ENCODE measurements at regions of chr20 and their contacts with region 1.

Region 1: DNA sequence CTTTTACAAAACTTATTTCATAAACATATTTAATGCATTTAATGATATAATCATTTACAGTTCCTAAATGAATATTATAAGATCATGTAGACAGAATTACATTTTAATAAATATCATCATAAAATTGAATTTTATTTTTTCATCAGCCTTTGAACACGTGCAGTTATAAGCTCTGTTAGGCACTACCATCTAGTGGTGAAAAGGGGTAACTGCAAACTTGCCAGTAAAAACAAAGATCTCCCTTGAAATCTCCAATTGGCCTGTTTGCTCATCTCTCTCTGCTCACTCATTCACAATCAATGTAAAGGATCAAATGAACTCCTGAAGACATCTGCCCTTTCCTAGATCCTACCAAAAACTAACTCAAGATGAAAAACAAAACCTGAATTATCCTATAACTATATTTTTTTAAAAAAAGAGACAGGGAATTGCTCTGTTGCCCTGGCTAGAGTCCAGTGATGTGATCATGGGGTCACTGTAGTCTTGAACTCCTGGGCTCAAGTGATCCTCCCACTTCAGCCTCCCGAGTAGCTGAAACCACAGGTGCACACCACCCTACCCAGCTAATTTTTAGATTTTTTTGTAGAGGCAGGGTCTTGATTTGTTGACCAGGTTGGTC is 31.7 kb downstream of the SAMHD1 start:
- DNase-seq: peak; percentile 25 to 40
- H3K4me3 ChIP-seq: no peak overlapping the region
- H3K27ac ChIP-seq: no peak overlapping the region
- H3K4me1 ChIP-seq: peaks cover 15% of the 10 kb centered on the region
- H3K27me3 ChIP-seq: no peaks in the 10 kb centered on the region
- CTCF ChIP-seq: peak; percentile 89

Region 2: GRCh38 chr20:35648836-35649235 is 1271.0 kb before region 1 on chr20:
- CTCF ChIA-PET with region 1: interaction called, 14 read pairs
- POLR2A ChIA-PET with region 1: no interaction called
- intact Hi-C with region 1: no loop called
- DNase-seq: no peak
- H3K4me3 ChIP-seq: no peak overlapping the region
- H3K27ac ChIP-seq: no peak overlapping the region
- H3K4me1 ChIP-seq: no peaks in the 10 kb centered on the region
- H3K27me3 ChIP-seq: no peaks in the 10 kb centered on the region
- CTCF ChIP-seq: no peak

Region 3: DNA sequence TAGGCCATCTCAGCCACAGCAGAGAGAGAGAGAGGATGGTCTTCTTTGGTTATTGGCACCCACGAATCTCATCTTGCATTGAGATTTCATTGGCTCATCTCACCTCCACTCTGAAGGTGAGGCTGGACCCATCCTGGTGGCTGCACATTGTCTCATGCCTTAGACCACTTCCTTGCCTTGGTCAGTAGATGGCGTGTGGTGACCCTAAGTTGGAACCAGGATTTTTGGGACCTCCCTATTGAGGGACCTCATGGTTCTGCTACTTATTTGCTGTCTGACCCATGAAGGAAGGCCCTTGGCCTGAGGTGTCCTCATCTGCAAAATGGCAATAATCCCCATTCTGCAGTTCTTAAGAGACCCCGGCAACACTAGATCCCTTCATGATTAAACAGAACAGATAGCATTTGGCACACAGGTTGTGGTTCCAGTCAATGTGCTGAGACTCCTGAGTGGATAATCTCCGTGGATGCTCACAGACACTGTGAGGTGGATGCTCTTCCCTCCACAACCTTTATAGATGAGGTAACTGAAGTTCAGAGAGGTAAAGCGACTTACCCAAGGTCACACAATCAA is 705.1 kb before region 1 on chr20:
- CTCF ChIA-PET with region 1: interaction called, 3 read pairs
- POLR2A ChIA-PET with region 1: no interaction called
- intact Hi-C with region 1: loop called (anchors 10 kb)
- DNase-seq: no peak
- H3K4me3 ChIP-seq: no peak overlapping the region
- H3K27ac ChIP-seq: no peak overlapping the region
- H3K4me1 ChIP-seq: no peaks in the 10 kb centered on the region
- H3K27me3 ChIP-seq: no peaks in the 10 kb centered on the region
- CTCF ChIP-seq: peak; percentile 72

Region 4: GRCh38 chr20:36377352-36378326 is 542.2 kb before region 1 on chr20:
- CTCF ChIA-PET with region 1: interaction called, 16 read pairs
- POLR2A ChIA-PET with region 1: no interaction called
- intact Hi-C with region 1: no loop called
- DNase-seq: no peak
- H3K4me3 ChIP-seq: no peak overlapping the region
- H3K27ac ChIP-seq: no peak overlapping the region
- H3K4me1 ChIP-seq: no peaks in the 10 kb centered on the region
- H3K27me3 ChIP-seq: peaks cover 61% of the 10 kb centered on the region
- CTCF ChIP-seq: no peak

Region 5: GRCh38 chr20:36792422-36792821 is 127.4 kb before region 1 on chr20:
- CTCF ChIA-PET with region 1: interaction called, 6 read pairs
- POLR2A ChIA-PET with region 1: no interaction called
- intact Hi-C with region 1: loop called (anchors 1 kb)
- DNase-seq: peak; percentile 85 to 87
- H3K4me3 ChIP-seq: no peak overlapping the region
- H3K27ac ChIP-seq: no peak overlapping the region
- H3K4me1 ChIP-seq: no peaks in the 10 kb centered on the region
- H3K27me3 ChIP-seq: no peaks in the 10 kb centered on the region
- CTCF ChIP-seq: peak; percentile 66

Region 6: DNA sequence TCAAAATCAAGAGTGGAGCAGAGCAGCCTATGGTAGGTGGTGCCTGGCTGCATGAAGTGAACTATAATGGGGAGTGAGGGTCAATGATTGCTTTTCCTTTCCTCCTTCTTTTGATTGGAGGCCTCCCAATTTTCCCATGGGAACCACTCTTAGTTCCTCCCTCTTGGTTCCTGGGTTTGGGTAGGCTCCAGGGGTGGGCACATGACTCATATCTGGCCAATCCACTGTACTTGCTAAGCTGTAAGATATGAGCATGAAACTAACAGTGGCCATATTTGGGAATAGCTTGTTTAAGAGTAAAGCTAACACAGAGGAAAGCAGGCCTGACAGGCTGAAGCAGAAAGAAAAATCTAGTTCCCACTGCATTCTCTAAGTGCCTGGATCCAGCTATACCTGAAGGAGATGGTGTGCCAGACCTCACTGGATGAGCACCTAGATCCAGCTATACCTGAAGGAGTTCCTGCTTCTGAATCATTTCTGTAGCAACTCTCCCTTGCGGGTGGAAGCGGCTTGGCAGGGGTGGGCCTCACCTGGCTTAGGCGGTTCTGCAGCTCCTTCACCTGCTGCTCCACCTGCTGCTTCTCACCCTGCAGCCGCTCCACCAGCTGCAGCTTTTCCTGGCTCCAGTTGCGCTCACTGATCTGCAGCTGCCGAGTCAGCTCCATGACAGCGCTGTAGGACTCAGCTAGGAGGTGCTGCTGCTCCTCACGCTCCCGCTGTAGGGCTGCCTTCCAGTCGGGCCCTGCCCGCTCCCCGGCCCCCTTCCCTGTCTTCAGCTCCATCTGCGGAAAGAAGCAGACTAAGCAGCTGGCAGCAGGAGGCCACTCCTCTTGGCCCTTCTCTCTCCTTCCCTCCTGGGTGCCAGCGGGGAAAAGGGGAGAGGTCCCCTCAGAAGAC is 117.2 kb before region 1 on chr20:
- CTCF ChIA-PET with region 1: interaction called, 11 read pairs
- POLR2A ChIA-PET with region 1: no interaction called
- intact Hi-C with region 1: no loop called
- DNase-seq: no peak
- H3K4me3 ChIP-seq: no peak overlapping the region
- H3K27ac ChIP-seq: no peak overlapping the region
- H3K4me1 ChIP-seq: no peaks in the 10 kb centered on the region
- H3K27me3 ChIP-seq: no peaks in the 10 kb centered on the region
- CTCF ChIP-seq: no peak

Measured in PC-9 (cell line).